Gastrocnemius medialis (tissue), 4 donors: ENCODE measurements at regions of chr2 and their contacts with region 1.

Region 1: GRCh38 chr2:172113617-172114016 is 10.9 kb upstream of the DLX2 start:
- DNase-seq: no peak
- ATAC-seq: peak in 1 of 2 donors; percentile 16
- H3K4me3 ChIP-seq: no peak overlapping the region
- H3K27ac ChIP-seq: no peak overlapping the region
- H3K4me1 ChIP-seq: no peaks in the 10 kb centered on the region
- H3K27me3 ChIP-seq: peaks cover 4 to 6% (median 6%) of the 10 kb centered on the region in 3 donors
- CTCF ChIP-seq: peak in 2 of 5 experiments; percentile 12 to 46
- POLR2A ChIP-seq: no peak

Region 2: GRCh38 chr2:171703574-171704347 is 409.9 kb before region 1 on chr2:
- in situ Hi-C with region 1: loop called (anchors 10 to 25 kb)
- intact Hi-C with region 1: no loop called
- DNase-seq: no peak
- ATAC-seq: peak in 1 of 2 donors; percentile 65
- H3K4me3 ChIP-seq: no peak overlapping the region
- H3K27ac ChIP-seq: no peak overlapping the region
- H3K4me1 ChIP-seq: peaks cover 16 to 18% of the 10 kb centered on the region in 2 donors
- H3K27me3 ChIP-seq: no peaks in the 10 kb centered on the region
- CTCF ChIP-seq: peak in 4 of 5 experiments; percentile 10 to 49 (median 28)
- POLR2A ChIP-seq: no peak

Region 3: GRCh38 chr2:172299737-172300174 is 186.1 kb after region 1 on chr2:
- in situ Hi-C with region 1: no loop called
- intact Hi-C with region 1: no loop called
- DNase-seq: no peak
- ATAC-seq: no peak
- H3K4me3 ChIP-seq: no peak overlapping the region
- H3K27ac ChIP-seq: no peak overlapping the region
- H3K4me1 ChIP-seq: no peaks in the 10 kb centered on the region
- H3K27me3 ChIP-seq: no peaks in the 10 kb centered on the region
- CTCF ChIP-seq: no peak
- POLR2A ChIP-seq: no peak